ENCODE measurements at regions of chr12 and their contacts with region 1.

Region 1: GRCh38 chr12:49069507-49070346 is at the start of gene RHEBL1:
- DNase-seq: peak; percentile 100
- H3K4me3 Mint-ChIP-seq: peak within 1 kb of the TSS; percentile 98
- H3K27ac Mint-ChIP-seq: peak within 1 kb of the TSS; percentile 90
- H3K4me1 Mint-ChIP-seq: peaks cover 12% of the 10 kb centered on the region
- H3K27me3 Mint-ChIP-seq: no peaks in the 10 kb centered on the region
- total RNA-seq, gene RHEBL1: 15.6 to 16.1 TPM

Region 2: DNA sequence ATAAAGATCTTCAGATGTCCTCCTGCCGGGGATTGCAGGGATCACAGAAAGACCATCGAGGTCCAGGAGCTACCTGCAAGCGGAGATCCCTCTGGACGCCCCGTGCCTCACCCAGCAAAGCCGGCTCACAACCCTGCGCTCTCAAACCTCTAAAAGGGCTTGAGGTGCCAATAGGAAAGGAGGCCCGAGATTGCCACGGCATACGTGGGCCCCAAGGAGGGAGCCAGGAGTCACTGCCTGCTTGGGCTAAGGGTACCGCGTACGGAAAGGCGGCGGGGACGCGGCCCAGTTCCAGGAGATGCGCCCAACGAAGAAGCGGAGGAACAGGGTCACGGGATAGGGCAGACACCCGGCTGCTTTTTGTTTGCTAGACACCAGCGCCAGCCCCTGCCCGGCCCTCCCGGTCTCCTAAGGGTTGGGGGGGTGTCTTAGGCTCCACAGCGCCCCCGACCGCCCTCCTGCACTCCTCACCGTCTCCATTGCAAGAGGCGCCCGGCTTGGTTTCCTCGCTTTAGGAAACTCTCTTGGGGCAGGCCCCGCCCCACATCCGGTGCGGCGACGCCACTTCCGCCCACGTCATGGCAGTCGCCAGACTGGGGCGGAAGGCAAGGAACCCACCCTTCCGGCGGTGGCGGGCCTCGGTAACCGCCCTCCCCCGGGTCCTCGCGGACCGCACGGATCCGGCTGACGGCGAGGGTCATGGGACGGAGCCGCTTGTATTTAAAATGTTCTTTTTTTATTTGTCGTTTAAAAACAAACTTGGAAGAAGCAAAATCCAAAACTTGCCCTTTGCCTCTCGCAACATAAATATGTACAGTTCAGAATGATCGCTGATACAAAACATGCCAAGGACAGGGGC is 51.2 kb before region 1 on chr12 and contains the start of gene PRKAG1:
- CTCF ChIA-PET with region 1: interaction called, 8 read pairs
- POLR2A ChIA-PET with region 1: interaction called, 3 read pairs
- intact Hi-C with region 1: loop called (anchors 1 kb)
- DNase-seq: peak; percentile 97
- H3K4me3 Mint-ChIP-seq: peak within 1 kb of the TSS; percentile 95
- H3K27ac Mint-ChIP-seq: peak within 1 kb of the TSS; percentile 92
- H3K4me1 Mint-ChIP-seq: peaks cover 40% of the 10 kb centered on the region
- H3K27me3 Mint-ChIP-seq: no peaks in the 10 kb centered on the region
- total RNA-seq, gene PRKAG1: 52.0 to 55.8 TPM

Region 3: DNA sequence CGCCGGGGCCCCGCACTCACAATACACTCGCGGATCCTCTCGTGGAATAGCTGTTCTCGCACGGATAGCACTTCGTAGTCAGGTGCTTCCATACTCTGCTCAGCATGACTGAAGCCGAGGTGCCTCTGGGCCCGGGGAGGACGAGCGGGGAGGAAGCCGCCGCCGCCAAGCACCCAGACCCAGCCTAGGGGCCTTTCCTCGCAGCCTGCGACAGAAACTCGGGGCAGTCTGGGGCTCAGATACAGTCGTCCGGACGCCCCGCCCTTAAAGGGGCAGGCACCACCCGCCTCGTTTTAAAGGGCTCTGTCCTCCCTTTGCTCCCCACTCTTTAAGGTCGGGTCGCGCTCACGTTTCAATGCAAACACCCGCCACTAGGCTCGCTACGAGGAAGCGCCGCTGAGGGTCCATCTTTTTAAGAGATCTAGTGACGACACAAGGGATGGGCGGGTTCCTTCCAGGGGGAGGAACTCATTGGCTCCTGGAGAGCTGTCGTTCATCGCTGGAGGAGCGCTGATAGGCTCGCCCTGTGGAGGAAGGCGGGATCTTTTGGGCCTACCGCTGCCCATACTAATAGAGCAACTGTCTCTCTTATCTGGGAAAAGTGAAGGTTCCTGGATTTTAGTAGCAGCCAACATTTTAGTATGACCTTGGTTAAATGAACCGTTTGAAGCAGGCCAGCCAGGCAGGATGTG is 40.9 kb after region 1 on chr12 and contains the start of gene LMBR1L:
- CTCF ChIA-PET with region 1: interaction called, 19 read pairs
- POLR2A ChIA-PET with region 1: interaction called, 6 read pairs
- intact Hi-C with region 1: loop called (anchors 1 kb)
- DNase-seq: peak; percentile 97
- H3K4me3 Mint-ChIP-seq: peak within 1 kb of the TSS; percentile 95
- H3K27ac Mint-ChIP-seq: peak within 1 kb of the TSS; percentile 80
- H3K4me1 Mint-ChIP-seq: peaks cover 24% of the 10 kb centered on the region
- H3K27me3 Mint-ChIP-seq: no peaks in the 10 kb centered on the region
- total RNA-seq, gene LMBR1L: 55.0 to 59.1 TPM

Region 4: DNA sequence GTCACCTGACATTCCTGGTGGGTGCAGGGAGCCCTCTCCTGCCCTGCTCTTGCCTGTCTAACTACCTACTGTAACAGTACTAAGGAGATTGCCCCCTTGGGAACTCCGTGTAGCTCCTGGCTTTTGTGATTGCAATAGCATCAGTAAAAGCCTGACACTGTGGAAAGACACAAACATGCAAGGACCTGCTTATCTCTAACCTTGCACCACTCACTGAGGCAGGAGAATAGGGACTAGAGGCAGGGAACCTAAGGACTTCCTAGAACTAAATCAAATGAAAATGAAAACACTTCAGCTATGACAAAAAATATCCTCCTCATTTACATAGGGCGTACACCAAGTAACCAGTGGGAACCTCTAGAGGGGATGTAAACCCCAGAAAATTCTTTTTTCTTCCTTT is 90.7 kb after region 1 on chr12:
- CTCF ChIA-PET with region 1: no interaction called
- POLR2A ChIA-PET with region 1: no interaction called
- intact Hi-C with region 1: no loop called
- DNase-seq: no peak
- H3K4me3 Mint-ChIP-seq: no peak overlapping the region
- H3K27ac Mint-ChIP-seq: no peak overlapping the region
- H3K4me1 Mint-ChIP-seq: no peaks in the 10 kb centered on the region
- H3K27me3 Mint-ChIP-seq: no peaks in the 10 kb centered on the region

Measured in activated CD4-positive, alpha-beta memory T cell treated with anti-CD3 and anti-CD28 coated beads for 36 hours (primary cell).